ENCODE measurements at regions of chr16 and their contacts with region 1.

Region 1: GRCh38 chr16:48831076-48831722 is 221.2 kb upstream of the N4BP1 start:
- DNase-seq: peak in 1 of 2 experiments; percentile 72
- H3K4me3 ChIP-seq: no peak overlapping the region
- H3K27ac ChIP-seq: no peak overlapping the region
- H3K4me1 ChIP-seq: no peaks in the 10 kb centered on the region
- H3K27me3 ChIP-seq: no peaks in the 10 kb centered on the region
- CTCF ChIP-seq: peak; percentile 38 to 65 (median 52)
- EP300 ChIP-seq: no peak
- POLR2A ChIP-seq: no peak
- RAD21 ChIP-seq: peak; percentile 21 to 41; a peak in 3 of 4 replicates

Region 2: GRCh38 chr16:48704710-48705109 is 126.5 kb before region 1 on chr16:
- CTCF ChIA-PET with region 1: no interaction called
- POLR2A ChIA-PET with region 1: no interaction called
- DNase-seq: no peak
- H3K4me3 ChIP-seq: no peak overlapping the region
- H3K27ac ChIP-seq: no peak overlapping the region
- H3K4me1 ChIP-seq: no peaks in the 10 kb centered on the region
- H3K27me3 ChIP-seq: no peaks in the 10 kb centered on the region
- CTCF ChIP-seq: no peak
- EP300 ChIP-seq: no peak
- POLR2A ChIP-seq: no peak
- RAD21 ChIP-seq: no peak

Region 3: GRCh38 chr16:48814994-48815393 is 16.2 kb before region 1 on chr16:
- CTCF ChIA-PET with region 1: interaction called, 12 read pairs
- POLR2A ChIA-PET with region 1: interaction called, 4 read pairs
- DNase-seq: no peak
- H3K4me3 ChIP-seq: no peak overlapping the region
- H3K27ac ChIP-seq: no peak overlapping the region
- H3K4me1 ChIP-seq: peaks cover 0 to 3% (median 1%) of the 10 kb centered on the region in 4 experiments; a peak in 2 of 7 replicates
- H3K27me3 ChIP-seq: peaks cover 8 to 25% (median 24%) of the 10 kb centered on the region in 4 experiments
- CTCF ChIP-seq: no peak
- EP300 ChIP-seq: no peak
- POLR2A ChIP-seq: no peak
- RAD21 ChIP-seq: no peak

Region 4: GRCh38 chr16:48820379-48820778 is 10.8 kb before region 1 on chr16:
- CTCF ChIA-PET with region 1: interaction called, 12 read pairs
- POLR2A ChIA-PET with region 1: no interaction called
- DNase-seq: no peak
- H3K4me3 ChIP-seq: no peak overlapping the region
- H3K27ac ChIP-seq: no peak overlapping the region
- H3K4me1 ChIP-seq: no peaks in the 10 kb centered on the region; a peak in 1 of 7 replicates
- H3K27me3 ChIP-seq: no peaks in the 10 kb centered on the region
- CTCF ChIP-seq: no peak
- EP300 ChIP-seq: no peak
- POLR2A ChIP-seq: no peak
- RAD21 ChIP-seq: no peak

Region 5: GRCh38 chr16:48845261-48845660 is 14.1 kb after region 1 on chr16:
- CTCF ChIA-PET with region 1: interaction called, 21 read pairs
- POLR2A ChIA-PET with region 1: no interaction called
- DNase-seq: no peak
- H3K4me3 ChIP-seq: no peak overlapping the region
- H3K27ac ChIP-seq: no peak overlapping the region
- H3K4me1 ChIP-seq: no peaks in the 10 kb centered on the region
- H3K27me3 ChIP-seq: peaks cover 0 to 2% (median 0%) of the 10 kb centered on the region in 4 experiments; a peak in 1 of 7 replicates
- CTCF ChIP-seq: no peak
- EP300 ChIP-seq: no peak
- POLR2A ChIP-seq: no peak
- RAD21 ChIP-seq: no peak

Region 6: DNA sequence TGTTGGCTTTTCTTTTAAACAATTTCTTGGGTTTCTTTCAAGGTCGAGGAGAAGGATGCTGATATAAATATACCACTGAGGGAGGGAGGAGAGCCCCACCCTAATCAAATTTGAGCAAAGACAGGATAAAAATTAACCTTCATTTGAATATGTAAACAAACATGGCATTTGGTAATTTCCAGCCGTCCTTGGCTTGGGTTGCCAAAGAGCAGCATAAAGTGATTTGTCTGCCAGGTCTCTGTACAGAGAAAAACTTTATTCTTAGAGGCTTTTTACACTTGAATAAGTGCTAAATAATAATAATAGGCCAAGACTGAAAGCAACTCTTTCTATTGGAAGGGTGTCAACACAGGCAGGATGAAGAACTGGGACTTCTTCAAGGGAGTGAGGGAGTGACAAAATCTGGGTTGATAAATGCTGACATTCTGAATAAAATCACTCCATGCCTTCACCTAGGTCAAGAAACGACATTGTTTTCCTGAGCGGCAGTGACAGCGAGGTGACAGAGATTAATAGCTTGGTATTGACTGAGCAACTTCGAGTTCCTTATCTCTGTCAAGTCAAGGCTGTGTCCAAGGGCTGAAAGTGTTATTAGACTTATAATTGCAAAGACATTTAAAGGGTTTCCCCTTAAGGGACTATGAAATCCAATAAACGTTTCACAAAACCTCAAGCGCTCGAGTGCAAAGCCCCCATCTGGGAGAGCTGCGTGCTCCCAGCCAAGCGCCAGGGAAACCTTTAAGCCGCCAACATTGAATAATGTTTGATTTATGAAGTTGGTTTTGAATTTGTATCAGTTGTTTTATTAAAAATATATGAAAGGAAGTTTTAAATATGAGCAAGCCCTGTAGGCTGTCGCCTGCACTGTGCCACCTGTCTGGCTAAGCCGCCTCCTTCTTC is 48.3 kb after region 1 on chr16:
- CTCF ChIA-PET with region 1: interaction called, 13 read pairs
- POLR2A ChIA-PET with region 1: no interaction called
- DNase-seq: no peak
- H3K4me3 ChIP-seq: no peak overlapping the region
- H3K27ac ChIP-seq: no peak overlapping the region
- H3K4me1 ChIP-seq: no peaks in the 10 kb centered on the region
- H3K27me3 ChIP-seq: no peaks in the 10 kb centered on the region
- CTCF ChIP-seq: no peak
- EP300 ChIP-seq: no peak
- POLR2A ChIP-seq: no peak
- RAD21 ChIP-seq: no peak

Region 7: GRCh38 chr16:48971571-48972077 is 140.4 kb after region 1 on chr16:
- CTCF ChIA-PET with region 1: no interaction called
- POLR2A ChIA-PET with region 1: no interaction called
- DNase-seq: no peak
- H3K4me3 ChIP-seq: no peak overlapping the region
- H3K27ac ChIP-seq: no peak overlapping the region
- H3K4me1 ChIP-seq: no peaks in the 10 kb centered on the region
- H3K27me3 ChIP-seq: no peaks in the 10 kb centered on the region
- CTCF ChIP-seq: no peak
- EP300 ChIP-seq: no peak
- POLR2A ChIP-seq: no peak
- RAD21 ChIP-seq: no peak

Region 8: GRCh38 chr16:49140618-49141017 is 309.4 kb after region 1 on chr16:
- CTCF ChIA-PET with region 1: no interaction called
- POLR2A ChIA-PET with region 1: no interaction called
- DNase-seq: no peak
- H3K4me3 ChIP-seq: no peak overlapping the region
- H3K27ac ChIP-seq: no peak overlapping the region
- H3K4me1 ChIP-seq: no peaks in the 10 kb centered on the region; a peak in 2 of 7 replicates
- H3K27me3 ChIP-seq: no peaks in the 10 kb centered on the region
- CTCF ChIP-seq: no peak
- EP300 ChIP-seq: no peak
- POLR2A ChIP-seq: no peak
- RAD21 ChIP-seq: no peak

Region 9: DNA sequence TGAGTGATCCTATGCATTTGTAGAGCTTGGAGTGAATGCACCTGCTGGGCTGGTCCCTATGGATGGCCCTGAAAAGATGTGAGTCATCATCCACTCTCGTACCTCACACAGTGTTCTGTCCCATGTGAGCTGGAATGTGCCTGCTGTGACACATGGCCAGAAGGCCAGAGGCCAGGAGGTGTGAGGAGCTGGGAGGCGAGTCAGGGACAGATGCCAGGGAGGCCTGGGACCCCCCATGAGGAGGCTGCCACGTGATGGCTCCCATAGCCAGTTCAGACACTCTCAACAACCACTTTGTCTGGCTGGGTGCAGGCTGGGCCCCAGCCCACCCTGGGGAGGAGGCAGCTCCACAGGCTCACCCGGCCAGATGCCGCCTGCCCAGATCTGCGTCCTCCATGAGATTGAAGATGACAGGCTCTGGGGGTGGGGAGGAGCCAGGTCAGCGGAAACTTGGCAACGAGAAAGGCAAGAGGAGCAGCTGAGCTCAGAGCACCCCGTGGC is 711.2 kb after region 1 on chr16:
- CTCF ChIA-PET with region 1: no interaction called
- POLR2A ChIA-PET with region 1: no interaction called
- DNase-seq: no peak
- H3K4me3 ChIP-seq: no peak overlapping the region
- H3K27ac ChIP-seq: no peak overlapping the region
- H3K4me1 ChIP-seq: peaks cover 0 to 18% (median 10%) of the 10 kb centered on the region in 4 experiments; a peak in 5 of 7 replicates
- H3K27me3 ChIP-seq: no peaks in the 10 kb centered on the region
- CTCF ChIP-seq: no peak
- EP300 ChIP-seq: no peak
- POLR2A ChIP-seq: no peak
- RAD21 ChIP-seq: no peak

Measured in H1 (cell line).